ENCODE measurements at regions of chr16 and their contacts with region 1.

Region 1: DNA sequence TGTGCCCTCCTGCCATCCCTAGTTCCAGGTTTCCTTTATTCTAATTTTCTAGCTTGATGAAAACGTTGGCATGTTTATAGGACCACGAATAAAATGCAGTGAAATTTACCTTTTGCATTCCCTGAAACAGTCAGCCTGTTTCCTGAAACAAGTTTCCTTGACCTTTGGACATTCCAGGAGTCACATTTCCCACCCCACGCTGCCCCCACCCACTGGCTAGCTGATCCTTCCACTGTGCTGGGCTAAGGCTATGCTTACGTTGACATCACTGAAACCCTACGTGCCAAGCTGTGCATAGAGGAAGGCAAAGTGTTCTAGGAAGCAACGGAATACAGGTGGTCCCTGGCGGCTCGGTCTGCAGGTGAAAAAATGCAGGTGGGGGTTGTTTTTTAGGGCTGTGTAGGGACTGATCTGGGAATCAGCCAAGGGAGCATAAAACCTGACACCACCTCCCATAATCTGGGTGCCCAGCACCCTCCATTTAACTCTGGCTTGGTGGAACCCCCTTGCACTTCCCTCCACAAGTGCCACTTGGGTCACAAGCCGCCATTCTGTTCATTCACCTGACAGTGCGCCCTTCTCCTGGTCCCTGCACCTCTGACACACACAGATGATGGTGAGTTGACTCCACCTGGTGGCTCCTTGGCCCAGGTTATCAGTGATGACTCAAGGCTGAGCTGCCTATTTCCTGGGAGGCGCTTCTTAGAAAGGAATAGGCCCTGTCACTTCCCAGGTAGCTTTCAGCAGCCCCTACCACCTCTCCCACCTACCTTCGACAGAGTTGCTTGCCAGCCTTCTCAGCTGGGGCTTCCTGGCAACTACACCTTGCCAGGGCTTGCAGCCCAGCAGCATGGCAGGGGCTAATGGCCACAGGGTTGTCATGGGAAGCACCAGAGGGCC is 83.7 kb downstream of the N4BP1 start:
- DNase-seq: peak; percentile 72
- ATAC-seq: peak; percentile 96
- H3K4me3 Mint-ChIP-seq: no peak overlapping the region
- H3K27ac Mint-ChIP-seq: no peak overlapping the region
- H3K4me1 Mint-ChIP-seq: peaks cover 6% of the 10 kb centered on the region
- H3K27me3 Mint-ChIP-seq: no peaks in the 10 kb centered on the region
- CTCF ChIP-seq: no peak

Region 2: DNA sequence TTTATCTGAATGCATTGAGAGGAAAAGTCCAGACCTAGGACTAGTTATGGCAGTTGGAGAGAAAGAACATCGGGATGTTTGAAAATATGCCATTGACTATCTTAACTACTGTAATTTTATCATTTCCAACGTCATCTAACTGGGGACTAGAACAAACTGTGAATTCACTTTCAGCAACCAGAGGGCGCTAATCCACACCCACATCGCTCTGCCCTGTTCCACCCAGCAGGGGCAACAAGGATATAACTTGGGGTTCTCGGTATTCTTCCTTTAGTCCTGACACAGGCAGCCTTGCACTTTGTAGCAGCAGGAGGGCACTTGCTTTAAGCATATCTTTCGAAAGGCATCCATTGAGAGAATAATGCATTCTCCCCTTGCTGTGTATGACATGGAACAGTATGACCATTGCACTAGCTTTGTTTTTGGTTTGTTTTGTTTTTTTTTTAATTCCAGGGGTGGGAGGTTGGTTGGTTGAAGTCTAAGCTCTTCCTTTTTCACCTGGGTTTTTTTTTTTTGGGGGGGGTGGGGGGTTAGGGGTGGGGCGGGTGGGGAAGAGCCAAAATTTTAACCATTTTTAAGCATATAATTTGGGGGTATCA is 172.6 kb before region 1 on chr16:
- CTCF ChIA-PET with region 1: interaction called, 16 read pairs
- POLR2A ChIA-PET with region 1: no interaction called
- DNase-seq: peak; percentile 70
- ATAC-seq: peak; percentile 91
- H3K4me3 Mint-ChIP-seq: no peak overlapping the region
- H3K27ac Mint-ChIP-seq: peak overlapping the region; percentile 86
- H3K4me1 Mint-ChIP-seq: peaks cover 5% of the 10 kb centered on the region
- H3K27me3 Mint-ChIP-seq: no peaks in the 10 kb centered on the region
- CTCF ChIP-seq: peak; percentile 76